Naive thymus-derived CD4-positive, alpha-beta T cell (primary cell): ENCODE measurements at regions of chr18 and their contacts with region 1.

Region 1: GRCh38 chr18:51687845-51688585 is 490.5 kb upstream of the MEX3C start:
- DNase-seq: no peak
- ATAC-seq: no peak
- H3K4me3 ChIP-seq: no peak overlapping the region
- H3K4me3 Mint-ChIP-seq: no peak overlapping the region
- H3K27ac ChIP-seq: no peak overlapping the region
- H3K27ac Mint-ChIP-seq: no peak overlapping the region
- H3K4me1 ChIP-seq: no peaks in the 10 kb centered on the region
- H3K4me1 Mint-ChIP-seq: no peaks in the 10 kb centered on the region
- H3K27me3 ChIP-seq: no peaks in the 10 kb centered on the region
- H3K27me3 Mint-ChIP-seq: peaks cover 0 to 13% (median under 1%) of the 10 kb centered on the region in 5 donors

Region 2: GRCh38 chr18:51531511-51531910 is 156.5 kb before region 1 on chr18:
- CTCF ChIA-PET with region 1: no interaction called
- POLR2A ChIA-PET with region 1: no interaction called
- intact Hi-C with region 1: no loop called
- DNase-seq: no peak
- ATAC-seq: no peak
- H3K4me3 ChIP-seq: no peak overlapping the region
- H3K4me3 Mint-ChIP-seq: no peak overlapping the region
- H3K27ac ChIP-seq: no peak overlapping the region
- H3K27ac Mint-ChIP-seq: no peak overlapping the region
- H3K4me1 ChIP-seq: no peaks in the 10 kb centered on the region
- H3K4me1 Mint-ChIP-seq: no peaks in the 10 kb centered on the region
- H3K27me3 ChIP-seq: no peaks in the 10 kb centered on the region
- H3K27me3 Mint-ChIP-seq: peaks cover 0 to 26% (median 4%) of the 10 kb centered on the region in 5 donors

Region 3: GRCh38 chr18:51603551-51603950 is 84.5 kb before region 1 on chr18:
- CTCF ChIA-PET with region 1: no interaction called
- POLR2A ChIA-PET with region 1: no interaction called
- intact Hi-C with region 1: loop called in 1 of 2 experiments (anchors 10 kb)
- DNase-seq: no peak
- ATAC-seq: no peak
- H3K4me3 ChIP-seq: no peak overlapping the region
- H3K4me3 Mint-ChIP-seq: no peak overlapping the region
- H3K27ac ChIP-seq: no peak overlapping the region
- H3K27ac Mint-ChIP-seq: no peak overlapping the region
- H3K4me1 ChIP-seq: no peaks in the 10 kb centered on the region
- H3K4me1 Mint-ChIP-seq: no peaks in the 10 kb centered on the region
- H3K27me3 ChIP-seq: no peaks in the 10 kb centered on the region
- H3K27me3 Mint-ChIP-seq: peaks cover 0 to 12% (median 3%) of the 10 kb centered on the region in 5 donors

Region 4: GRCh38 chr18:51711298-51711889 is 23.4 kb after region 1 on chr18:
- CTCF ChIA-PET with region 1: no interaction called
- POLR2A ChIA-PET with region 1: no interaction called
- intact Hi-C with region 1: no loop called
- DNase-seq: no peak
- ATAC-seq: no peak
- H3K4me3 ChIP-seq: no peak overlapping the region
- H3K4me3 Mint-ChIP-seq: no peak overlapping the region
- H3K27ac ChIP-seq: no peak overlapping the region
- H3K27ac Mint-ChIP-seq: no peak overlapping the region
- H3K4me1 ChIP-seq: no peaks in the 10 kb centered on the region
- H3K4me1 Mint-ChIP-seq: peaks cover 0 to 1% (median 0%) of the 10 kb centered on the region in 7 donors
- H3K27me3 ChIP-seq: no peaks in the 10 kb centered on the region
- H3K27me3 Mint-ChIP-seq: peaks cover 0 to 13% (median 0%) of the 10 kb centered on the region in 5 donors